CD4-positive, alpha-beta memory T cell (primary cell): ENCODE measurements at regions of chr5 and their contacts with region 1.

Region 1: GRCh38 chr5:75603371-75603770 is 7.9 kb upstream of the ANKDD1B start:
- DNase-seq: no peak
- H3K4me3 ChIP-seq: no peak overlapping the region
- H3K4me3 Mint-ChIP-seq: no peak overlapping the region
- H3K27ac ChIP-seq: no peak overlapping the region
- H3K27ac Mint-ChIP-seq: no peak overlapping the region
- H3K4me1 ChIP-seq: peaks cover 10% of the 10 kb centered on the region
- H3K4me1 Mint-ChIP-seq: peaks cover 8 to 19% (median 11%) of the 10 kb centered on the region in 4 donors
- H3K27me3 ChIP-seq: no peaks in the 10 kb centered on the region
- H3K27me3 Mint-ChIP-seq: no peaks in the 10 kb centered on the region

Region 2: GRCh38 chr5:75617736-75618352 is 14.5 kb after region 1 on chr5:
- CTCF ChIA-PET with region 1: no interaction called
- POLR2A ChIA-PET with region 1: no interaction called
- intact Hi-C with region 1: loop called (anchors 1 kb)
- DNase-seq: no peak
- H3K4me3 ChIP-seq: no peak overlapping the region
- H3K4me3 Mint-ChIP-seq: no peak overlapping the region
- H3K27ac ChIP-seq: no peak overlapping the region
- H3K27ac Mint-ChIP-seq: no peak overlapping the region
- H3K4me1 ChIP-seq: no peaks in the 10 kb centered on the region
- H3K4me1 Mint-ChIP-seq: no peaks in the 10 kb centered on the region
- H3K27me3 ChIP-seq: no peaks in the 10 kb centered on the region
- H3K27me3 Mint-ChIP-seq: no peaks in the 10 kb centered on the region